Activated CD4-positive, alpha-beta T cell treated with anti-CD3 and anti-CD28 coated beads, Interleukin-2, amount 10 ng/mL, durations not matched to agents 24 days and 14 days (primary cell): ENCODE measurements at regions of chr12 and their contacts with region 1.

Region 1: GRCh38 chr12:21501379-21501956 is at the starts of genes GOLT1B and RECQL:
- DNase-seq: peak; percentile 97
- H3K4me3 Mint-ChIP-seq: no peak within 1 kb of the TSS
- H3K27ac Mint-ChIP-seq: peak within 1 kb of the TSS; percentile 52
- H3K4me1 Mint-ChIP-seq: peaks cover 36% of the 10 kb centered on the region
- H3K27me3 Mint-ChIP-seq: no peaks in the 10 kb centered on the region
- total RNA-seq, gene GOLT1B: 41.1 and 42.9 TPM in 2 replicates
- total RNA-seq, gene RECQL: 61.9 and 64.9 TPM in 2 replicates

Region 2: GRCh38 chr12:21438643-21439042 is 62.8 kb before region 1 on chr12:
- intact Hi-C with region 1: loop called (anchors 1 kb)
- DNase-seq: no peak
- H3K4me3 Mint-ChIP-seq: peak overlapping the region; percentile 95
- H3K27ac Mint-ChIP-seq: peak overlapping the region; percentile 97
- H3K4me1 Mint-ChIP-seq: peaks cover 34% of the 10 kb centered on the region
- H3K27me3 Mint-ChIP-seq: peaks cover 5% of the 10 kb centered on the region

Region 3: DNA sequence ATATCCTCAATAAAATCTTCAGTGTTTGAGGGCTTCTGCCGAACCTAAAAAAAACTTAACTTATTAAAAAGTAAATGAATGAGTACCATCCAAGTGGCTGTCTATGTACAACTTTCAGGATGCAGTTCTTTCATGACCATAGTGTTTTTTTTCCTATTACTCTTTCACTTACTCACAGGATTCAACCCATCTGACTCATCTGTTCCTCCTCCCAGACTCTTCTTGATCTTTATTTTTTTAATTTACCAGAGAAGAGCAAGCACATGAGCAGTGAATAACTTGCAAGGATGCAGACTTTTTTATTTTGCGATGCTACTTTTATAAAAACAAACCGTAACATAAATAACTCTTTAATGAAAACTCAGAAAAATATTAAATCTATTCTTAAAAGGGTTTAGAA is 24.5 kb before region 1 on chr12:
- intact Hi-C with region 1: loop called (anchors 2 kb)
- DNase-seq: no peak
- H3K4me3 Mint-ChIP-seq: peak overlapping the region; percentile 34
- H3K27ac Mint-ChIP-seq: peak overlapping the region; percentile 81
- H3K4me1 Mint-ChIP-seq: peaks cover 11% of the 10 kb centered on the region
- H3K27me3 Mint-ChIP-seq: no peaks in the 10 kb centered on the region

Region 4: GRCh38 chr12:21559855-21560569 is 58.5 kb after region 1 on chr12:
- intact Hi-C with region 1: loop called (anchors 5 kb)
- DNase-seq: no peak
- H3K4me3 Mint-ChIP-seq: no peak overlapping the region
- H3K27ac Mint-ChIP-seq: peak overlapping the region; percentile 67
- H3K4me1 Mint-ChIP-seq: peaks cover 5% of the 10 kb centered on the region
- H3K27me3 Mint-ChIP-seq: no peaks in the 10 kb centered on the region

Region 5: DNA sequence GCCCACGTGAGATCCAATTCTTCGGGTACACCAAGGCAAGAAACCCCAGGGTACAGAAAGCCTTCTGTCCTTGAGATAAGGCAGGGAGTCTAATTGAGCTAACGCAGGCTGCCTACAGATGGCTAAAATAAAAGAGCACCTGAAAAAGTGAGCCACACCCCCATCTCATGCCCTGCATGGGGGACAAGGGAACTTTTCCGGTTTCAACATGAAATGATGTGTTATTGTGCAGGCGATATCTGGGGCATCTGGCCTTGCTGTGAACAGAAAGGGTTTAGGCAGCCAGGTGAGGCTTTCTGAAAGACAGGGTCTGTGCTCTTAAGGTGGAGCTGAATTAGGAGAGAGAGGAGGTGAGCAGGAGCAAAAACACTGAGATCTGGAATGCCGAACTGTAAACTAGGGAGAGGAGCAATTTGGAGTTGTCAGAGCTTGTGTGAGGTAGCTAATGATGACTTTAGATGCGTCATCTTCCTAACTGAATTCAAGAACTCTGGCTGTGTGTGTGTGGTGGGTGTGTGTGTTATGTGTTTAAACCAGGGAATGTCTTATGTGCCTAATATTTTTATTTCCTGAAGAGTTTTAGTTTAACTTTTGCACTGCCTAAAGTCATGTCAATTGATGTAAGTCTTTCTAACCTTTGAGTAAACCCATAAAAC is 176.3 kb after region 1 on chr12:
- intact Hi-C with region 1: loop called (anchors 5 kb)
- DNase-seq: no peak
- H3K4me3 Mint-ChIP-seq: no peak overlapping the region
- H3K27ac Mint-ChIP-seq: peak overlapping the region; percentile 57
- H3K4me1 Mint-ChIP-seq: peaks cover 32% of the 10 kb centered on the region
- H3K27me3 Mint-ChIP-seq: no peaks in the 10 kb centered on the region

Region 6: GRCh38 chr12:22544038-22544979 is 1042.8 kb after region 1 on chr12 and contains the start of gene C2CD5:
- intact Hi-C with region 1: loop called (anchors 5 kb)
- DNase-seq: peak; percentile 98
- H3K4me3 Mint-ChIP-seq: peak within 1 kb of the TSS; percentile 92
- H3K27ac Mint-ChIP-seq: peak within 1 kb of the TSS; percentile 97
- H3K4me1 Mint-ChIP-seq: peaks cover 34% of the 10 kb centered on the region
- H3K27me3 Mint-ChIP-seq: peaks cover 16% of the 10 kb centered on the region
- total RNA-seq, gene C2CD5: 31.4 and 35.1 TPM in 2 replicates